Heart right ventricle (tissue), 16 donors: ENCODE measurements at regions of chr22 and their contacts with region 1.

Region 1: DNA sequence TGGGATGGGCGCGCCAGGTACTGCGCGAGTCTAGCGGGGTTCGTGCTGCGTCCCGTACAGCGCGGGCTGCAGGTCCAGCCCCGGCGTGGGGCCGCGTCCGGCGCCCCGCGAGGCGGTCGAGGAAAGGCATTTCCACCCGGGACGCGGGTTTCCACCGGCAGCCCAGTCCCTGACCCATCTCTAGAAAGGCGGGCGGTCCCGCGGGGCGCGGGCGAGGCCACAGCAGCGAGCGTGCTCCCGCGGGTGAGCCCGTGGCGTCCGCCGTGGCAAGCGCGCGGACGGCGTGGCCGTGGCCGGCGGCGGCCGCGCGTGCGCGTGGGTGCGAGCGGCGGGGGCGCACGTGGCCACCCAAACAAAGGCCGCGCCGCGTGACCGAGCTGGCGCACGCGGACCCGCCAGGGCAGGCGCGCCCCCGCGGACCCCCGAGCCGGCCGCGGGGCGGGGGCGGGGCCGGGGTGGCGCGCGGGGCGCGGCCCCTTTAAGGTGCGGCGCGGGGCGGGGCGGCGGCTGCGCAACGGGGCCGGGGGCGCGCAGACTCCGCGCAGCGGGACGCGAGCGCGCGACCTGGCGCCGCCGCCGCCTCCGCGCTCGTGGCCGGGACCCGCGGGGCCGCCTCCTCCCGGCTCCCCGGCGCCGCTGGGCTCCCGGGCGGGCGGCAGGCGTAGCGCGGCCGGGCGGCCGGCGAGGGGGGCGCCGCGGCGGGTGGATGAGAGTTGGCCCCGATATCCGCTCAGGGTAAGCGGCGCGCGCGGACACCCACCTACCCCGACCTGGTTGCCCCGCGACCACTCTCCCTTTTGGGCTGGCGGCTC is 39.3 kb upstream of the CELSR1 start:
- DNase-seq: peak in 1 of 2 donors; percentile 71
- ATAC-seq: peak in 5 of 8 donors; percentile 13 to 58 (median 28)
- H3K4me3 ChIP-seq: peak overlapping the region in 9 of 10 donors; percentile 63 to 98 (median 78)
- H3K27ac ChIP-seq: peak overlapping the region; percentile 71 to 92 (median 88)
- H3K4me1 ChIP-seq: peaks cover 36 to 80% (median 72%) of the 10 kb centered on the region in 9 donors
- H3K27me3 ChIP-seq: no peaks in the 10 kb centered on the region
- CTCF ChIP-seq: no peak

Region 2: DNA sequence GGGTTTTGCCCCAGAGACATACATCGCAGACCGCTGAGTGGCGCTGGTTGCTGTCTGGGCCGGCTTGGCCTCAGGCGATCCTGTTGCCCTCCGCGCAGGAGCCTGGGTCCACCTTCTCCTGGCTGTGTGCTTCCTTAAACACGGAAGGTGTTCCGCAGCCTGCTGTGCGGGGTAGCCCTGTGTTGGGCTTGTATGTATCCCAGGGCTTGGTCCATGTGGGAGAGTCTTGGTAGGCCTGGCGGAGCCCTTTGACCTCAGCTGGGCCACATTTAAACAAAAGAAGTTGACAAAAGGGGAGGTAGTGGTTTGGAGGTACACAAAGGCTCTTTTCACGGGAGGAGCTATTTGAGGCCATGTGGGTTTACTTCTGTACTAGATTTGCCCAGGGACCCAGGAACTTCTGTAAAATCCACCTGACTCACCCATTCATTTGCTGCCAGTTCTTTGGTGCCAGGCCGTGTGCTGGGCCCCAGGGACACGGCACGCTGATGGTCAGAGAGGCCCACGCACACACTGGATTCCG is 32.5 kb after region 1 on chr22:
- intact Hi-C with region 1: no loop called
- DNase-seq: no peak
- ATAC-seq: no peak
- H3K4me3 ChIP-seq: no peak overlapping the region
- H3K27ac ChIP-seq: no peak overlapping the region
- H3K4me1 ChIP-seq: peaks cover 22 to 69% (median 39%) of the 10 kb centered on the region in 9 donors
- H3K27me3 ChIP-seq: no peaks in the 10 kb centered on the region
- CTCF ChIP-seq: no peak

Region 3: DNA sequence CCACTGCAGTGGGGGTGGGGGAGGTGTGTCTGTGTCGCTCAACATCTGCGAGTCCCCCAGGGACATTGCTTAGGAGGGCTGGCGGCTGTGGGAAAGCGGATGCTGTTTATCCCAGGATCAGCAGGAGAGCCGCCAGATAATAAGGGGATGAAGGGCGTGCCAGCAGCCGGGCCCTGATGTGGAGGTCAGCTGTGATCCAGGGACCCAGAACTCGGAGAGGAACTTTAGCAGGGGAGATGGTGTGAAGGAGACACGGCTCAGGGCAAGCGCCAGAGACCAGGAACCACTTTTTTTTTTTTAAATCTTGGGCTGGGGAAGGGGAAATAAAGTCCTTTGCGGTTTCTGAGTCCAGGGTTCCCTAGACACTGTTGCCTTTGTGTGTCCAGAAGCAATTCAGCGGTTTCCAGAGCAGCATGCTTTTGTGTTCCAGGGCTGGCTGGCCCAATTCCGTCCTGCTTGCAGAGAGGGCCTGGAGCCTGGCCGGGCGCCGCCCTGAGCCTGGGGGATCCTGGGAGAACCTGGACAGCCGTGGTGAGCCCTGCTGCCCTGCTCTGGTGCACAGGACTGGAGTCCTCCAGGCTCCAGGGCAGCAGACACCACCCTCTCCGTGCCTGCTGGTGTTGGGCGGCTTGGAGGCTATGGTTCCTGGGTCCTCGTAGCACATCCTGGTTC is 43.2 kb after region 1 on chr22 and contains the start of gene GRAMD4:
- intact Hi-C with region 1: loop called in 3 of 10 experiments (anchors 5 kb)
- DNase-seq: peak; percentile 72 to 74
- ATAC-seq: peak; percentile 18 to 74 (median 56)
- H3K4me3 ChIP-seq: peak within 1 kb of the TSS in 1 of 10 donors; percentile 28
- H3K27ac ChIP-seq: peak within 1 kb of the TSS; percentile 44 to 87 (median 80)
- H3K4me1 ChIP-seq: peaks cover 36 to 79% (median 66%) of the 10 kb centered on the region in 9 donors
- H3K27me3 ChIP-seq: no peaks in the 10 kb centered on the region
- CTCF ChIP-seq: no peak
- total RNA-seq, gene GRAMD4: 53.9 to 143 (median 71.0) TPM

Region 4: DNA sequence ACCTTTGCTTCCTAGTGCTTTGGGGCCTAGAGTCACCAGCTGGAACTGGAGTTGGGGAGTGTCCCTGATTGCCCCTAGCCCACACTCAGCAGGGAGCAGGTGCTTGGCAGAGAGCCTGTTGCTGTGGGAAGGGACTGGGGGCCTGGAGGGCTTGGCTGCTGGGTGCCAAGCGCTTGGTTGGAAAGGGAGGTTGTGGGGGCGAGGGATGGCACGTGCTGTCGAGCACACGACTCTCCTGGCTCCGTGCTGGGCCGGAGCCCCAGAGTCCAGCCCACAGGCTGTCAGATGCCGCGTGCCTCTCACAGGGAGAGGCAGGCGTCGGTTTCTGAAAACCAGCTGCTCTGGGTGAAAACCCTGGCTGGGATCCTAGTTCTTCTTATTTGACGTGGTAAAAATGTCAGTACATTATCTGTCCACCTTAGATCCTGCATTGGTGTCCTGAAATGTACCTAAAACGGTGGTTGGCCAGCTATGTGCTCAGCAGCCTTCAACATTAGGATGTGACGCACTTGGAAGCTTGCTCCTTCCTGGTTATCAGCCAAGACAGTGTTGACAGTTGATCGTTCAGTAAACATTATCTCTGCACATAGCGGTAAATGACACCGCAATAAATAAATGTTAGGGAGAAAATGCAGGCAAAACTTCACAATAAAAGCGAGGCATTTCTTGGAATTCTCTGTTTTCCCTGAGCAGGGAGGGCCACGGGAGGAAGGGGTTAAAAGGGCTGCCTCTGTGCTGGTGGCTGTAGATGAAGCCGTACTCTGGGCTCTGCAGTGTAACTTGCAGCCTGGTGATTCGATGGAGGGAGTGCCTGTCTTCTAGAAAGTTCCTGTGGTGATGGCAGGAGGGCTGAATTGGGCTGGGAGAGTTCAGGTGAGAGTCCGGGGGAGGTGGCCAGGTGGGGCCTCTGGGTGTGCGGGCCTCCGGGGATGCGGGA is 72.6 kb after region 1 on chr22:
- intact Hi-C with region 1: loop called in 4 of 10 experiments (anchors 1 to 10 kb)
- DNase-seq: peak; percentile 58 to 72
- ATAC-seq: peak; percentile 48 to 79 (median 73)
- H3K4me3 ChIP-seq: no peak overlapping the region
- H3K27ac ChIP-seq: peak overlapping the region; percentile 75 to 94 (median 86)
- H3K4me1 ChIP-seq: peaks cover 55 to 96% (median 81%) of the 10 kb centered on the region in 9 donors
- H3K27me3 ChIP-seq: no peaks in the 10 kb centered on the region
- CTCF ChIP-seq: no peak

Region 5: DNA sequence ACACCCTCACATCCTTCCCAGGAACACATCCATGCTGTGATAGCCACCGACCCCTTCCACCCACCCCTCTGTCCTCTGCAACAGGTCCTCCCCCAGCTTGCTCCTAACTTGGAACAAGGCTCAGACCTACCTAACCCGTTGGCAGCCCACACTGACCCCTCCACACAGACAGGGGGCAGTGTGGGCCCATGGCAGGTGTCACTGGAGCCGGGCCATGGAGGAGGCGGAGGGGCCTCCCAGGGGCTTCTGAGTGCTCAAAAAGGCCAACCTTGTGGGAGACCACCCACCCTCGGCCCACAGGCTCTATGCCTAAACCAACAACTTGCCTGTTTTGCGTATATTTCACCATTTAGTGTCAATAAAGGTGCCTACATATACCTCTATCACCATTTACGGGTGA is 104.2 kb after region 1 on chr22:
- intact Hi-C with region 1: loop called in 2 of 10 experiments (anchors 5 kb)
- DNase-seq: no peak
- ATAC-seq: no peak
- H3K4me3 ChIP-seq: no peak overlapping the region
- H3K27ac ChIP-seq: no peak overlapping the region
- H3K4me1 ChIP-seq: peaks cover 9 to 70% (median 47%) of the 10 kb centered on the region in 9 donors
- H3K27me3 ChIP-seq: no peaks in the 10 kb centered on the region
- CTCF ChIP-seq: peak in 7 of 9 donors; percentile 17 to 45 (median 24)

Region 6: GRCh38 chr22:46737976-46738646 is 161.3 kb after region 1 on chr22 and contains the start of gene CERK:
- intact Hi-C with region 1: loop called in 5 of 10 experiments (anchors 5 kb)
- DNase-seq: peak; percentile 81 to 91
- ATAC-seq: peak; percentile 69 to 89 (median 74)
- H3K4me3 ChIP-seq: peak within 1 kb of the TSS; percentile 57 to 99 (median 92)
- H3K27ac ChIP-seq: peak within 1 kb of the TSS; percentile 96 to 99 (median 98)
- H3K4me1 ChIP-seq: peaks cover 28 to 83% (median 70%) of the 10 kb centered on the region in 9 donors
- H3K27me3 ChIP-seq: no peaks in the 10 kb centered on the region
- CTCF ChIP-seq: no peak
- total RNA-seq, gene CERK: 50.9 to 97.0 (median 74.2) TPM

Region 7: GRCh38 chr22:47059701-47060161 is 483.0 kb after region 1 on chr22:
- intact Hi-C with region 1: no loop called
- DNase-seq: no peak
- ATAC-seq: no peak
- H3K4me3 ChIP-seq: no peak overlapping the region
- H3K27ac ChIP-seq: no peak overlapping the region
- H3K4me1 ChIP-seq: no peaks in the 10 kb centered on the region
- H3K27me3 ChIP-seq: no peaks in the 10 kb centered on the region
- CTCF ChIP-seq: no peak